Calu3 (cell line): ENCODE measurements at regions of chr6 and their contacts with region 1.

Region 1: GRCh38 chr6:138287144-138287955 is 69.1 kb upstream of the PBOV1 start:
- DNase-seq: peak; percentile 73
- H3K4me3 Mint-ChIP-seq: no peak overlapping the region
- H3K27ac Mint-ChIP-seq: peak overlapping the region; percentile 19
- H3K4me1 Mint-ChIP-seq: peaks cover 8% of the 10 kb centered on the region
- H3K27me3 Mint-ChIP-seq: no peaks in the 10 kb centered on the region
- CTCF ChIP-seq: peak; percentile 37

Region 2: DNA sequence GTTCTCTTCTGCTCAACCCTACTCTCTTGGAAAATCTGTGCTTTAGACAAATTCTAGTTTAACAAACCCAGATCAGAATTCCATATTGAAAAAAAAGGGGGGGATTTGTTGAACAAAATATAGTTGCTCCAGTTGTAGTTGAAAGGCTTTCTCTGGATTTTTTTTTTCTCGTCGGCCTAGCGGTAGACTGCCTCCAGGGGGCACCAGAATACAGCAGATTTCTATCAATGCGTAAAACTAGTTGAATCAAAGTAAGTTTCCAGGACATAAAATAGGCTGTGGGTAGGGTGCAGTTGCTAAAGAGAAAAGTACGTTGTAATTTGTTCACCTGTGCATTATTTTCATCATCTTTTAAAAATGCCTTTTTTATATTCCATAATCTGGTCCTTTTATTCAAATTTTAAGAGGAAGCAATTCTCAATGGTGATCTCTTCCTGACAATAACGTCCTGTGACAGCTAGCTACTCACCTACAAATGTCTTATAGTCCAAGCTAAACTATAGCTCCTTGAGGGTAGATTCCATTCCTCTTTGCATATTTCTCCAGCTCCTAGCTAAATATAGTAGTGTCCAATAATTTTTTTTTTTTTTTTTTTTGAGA is 285.5 kb before region 1 on chr6:
- CTCF ChIA-PET with region 1: interaction called, 3 read pairs
- intact Hi-C with region 1: loop called (anchors 10 kb)
- DNase-seq: peak; percentile 65
- H3K4me3 Mint-ChIP-seq: no peak overlapping the region
- H3K27ac Mint-ChIP-seq: no peak overlapping the region
- H3K4me1 Mint-ChIP-seq: peaks cover 4% of the 10 kb centered on the region
- H3K27me3 Mint-ChIP-seq: no peaks in the 10 kb centered on the region
- CTCF ChIP-seq: peak; percentile 62

Region 3: GRCh38 chr6:138115877-138116660 is 171.3 kb before region 1 on chr6:
- CTCF ChIA-PET with region 1: interaction called, 10 read pairs
- intact Hi-C with region 1: loop called (anchors 2 kb)
- DNase-seq: peak; percentile 28
- H3K4me3 Mint-ChIP-seq: no peak overlapping the region
- H3K27ac Mint-ChIP-seq: no peak overlapping the region
- H3K4me1 Mint-ChIP-seq: peaks cover 6% of the 10 kb centered on the region
- H3K27me3 Mint-ChIP-seq: no peaks in the 10 kb centered on the region
- CTCF ChIP-seq: peak; percentile 37

Region 4: GRCh38 chr6:138161338-138162110 is 125.8 kb before region 1 on chr6 and contains the start of gene ARFGEF3:
- CTCF ChIA-PET with region 1: no interaction called
- intact Hi-C with region 1: loop called (anchors 5 kb)
- DNase-seq: peak; percentile 69
- H3K4me3 Mint-ChIP-seq: peak within 1 kb of the TSS; percentile 87
- H3K27ac Mint-ChIP-seq: peak within 1 kb of the TSS; percentile 66
- H3K4me1 Mint-ChIP-seq: peaks cover 24% of the 10 kb centered on the region
- H3K27me3 Mint-ChIP-seq: no peaks in the 10 kb centered on the region
- CTCF ChIP-seq: no peak
- total RNA-seq, gene ARFGEF3: 15.4 and 16.3 TPM in 2 replicates

Region 5: GRCh38 chr6:138346302-138347195 is 59.2 kb after region 1 on chr6:
- CTCF ChIA-PET with region 1: no interaction called
- intact Hi-C with region 1: no loop called
- DNase-seq: no peak
- H3K4me3 Mint-ChIP-seq: no peak overlapping the region
- H3K27ac Mint-ChIP-seq: no peak overlapping the region
- H3K4me1 Mint-ChIP-seq: peaks cover 16% of the 10 kb centered on the region
- H3K27me3 Mint-ChIP-seq: no peaks in the 10 kb centered on the region
- CTCF ChIP-seq: no peak